ENCODE measurements at regions of chrX and their contacts with region 1.

Region 1: GRCh38 chrX:21374163-21374993 is at the start of gene CNKSR2:
- DNase-seq: peak; percentile 3
- ATAC-seq: peak; percentile 56
- H3K4me3 ChIP-seq: peak within 1 kb of the TSS; percentile 60
- H3K27ac ChIP-seq: no peak within 1 kb of the TSS
- H3K4me1 ChIP-seq: no peaks in the 10 kb centered on the region
- H3K27me3 ChIP-seq: peaks cover 18% of the 10 kb centered on the region
- CTCF ChIP-seq: no peak
- POLR2A ChIP-seq: no peak
- RAD21 ChIP-seq: no peak
- total RNA-seq, gene CNKSR2: 0.56 and 0.90 TPM in 2 replicates

Region 2: GRCh38 chrX:20789103-20789502 is 585.3 kb before region 1 on chrX:
- CTCF ChIA-PET with region 1: interaction called, 10 read pairs
- POLR2A ChIA-PET with region 1: no interaction called
- dilution Hi-C with region 1: no loop called
- in situ Hi-C with region 1: no loop called
- intact Hi-C with region 1: no loop called
- DNase-seq: no peak
- ATAC-seq: no peak
- H3K4me3 ChIP-seq: no peak overlapping the region
- H3K27ac ChIP-seq: no peak overlapping the region
- H3K4me1 ChIP-seq: no peaks in the 10 kb centered on the region
- H3K27me3 ChIP-seq: no peaks in the 10 kb centered on the region
- CTCF ChIP-seq: no peak
- POLR2A ChIP-seq: no peak
- RAD21 ChIP-seq: no peak

Region 3: GRCh38 chrX:20825984-20826383 is 548.4 kb before region 1 on chrX:
- CTCF ChIA-PET with region 1: no interaction called
- POLR2A ChIA-PET with region 1: no interaction called
- dilution Hi-C with region 1: no loop called
- in situ Hi-C with region 1: no loop called
- intact Hi-C with region 1: no loop called
- DNase-seq: no peak
- ATAC-seq: no peak
- H3K4me3 ChIP-seq: no peak overlapping the region
- H3K27ac ChIP-seq: no peak overlapping the region
- H3K4me1 ChIP-seq: no peaks in the 10 kb centered on the region
- H3K27me3 ChIP-seq: no peaks in the 10 kb centered on the region
- CTCF ChIP-seq: no peak
- POLR2A ChIP-seq: no peak
- RAD21 ChIP-seq: no peak